ENCODE measurements at regions of chrX and their contacts with region 1.

Region 1: GRCh38 chrX:48071064-48071985 is at the start of gene ZNF630:
- DNase-seq: peak; percentile 61 to 74
- ATAC-seq: peak; percentile 84 to 96 (median 93)
- H3K4me3 ChIP-seq: peak within 1 kb of the TSS; percentile 76
- H3K27ac ChIP-seq: peak within 1 kb of the TSS; percentile 73
- H3K4me1 ChIP-seq: no peaks in the 10 kb centered on the region
- H3K27me3 ChIP-seq: no peaks in the 10 kb centered on the region
- CTCF ChIP-seq: no peak
- total RNA-seq, gene ZNF630: 0.34 to 0.99 (median 0.68) TPM

Region 2: GRCh38 chrX:48475774-48476577 is 404.7 kb after region 1 on chrX and contains the start of gene FTSJ1:
- intact Hi-C with region 1: loop called in 1 of 2 experiments (anchors 10 kb)
- DNase-seq: peak; percentile 88 to 93
- ATAC-seq: peak; percentile 91 to 96 (median 93)
- H3K4me3 ChIP-seq: peak within 1 kb of the TSS; percentile 70
- H3K27ac ChIP-seq: peak within 1 kb of the TSS; percentile 72
- H3K4me1 ChIP-seq: no peaks in the 10 kb centered on the region
- H3K27me3 ChIP-seq: no peaks in the 10 kb centered on the region
- CTCF ChIP-seq: no peak
- total RNA-seq, gene FTSJ1: 14.5 to 26.8 (median 21.2) TPM

Measured in psoas muscle (tissue), 8 donors.